ENCODE measurements at regions of chr7 and their contacts with region 1.

Region 1: DNA sequence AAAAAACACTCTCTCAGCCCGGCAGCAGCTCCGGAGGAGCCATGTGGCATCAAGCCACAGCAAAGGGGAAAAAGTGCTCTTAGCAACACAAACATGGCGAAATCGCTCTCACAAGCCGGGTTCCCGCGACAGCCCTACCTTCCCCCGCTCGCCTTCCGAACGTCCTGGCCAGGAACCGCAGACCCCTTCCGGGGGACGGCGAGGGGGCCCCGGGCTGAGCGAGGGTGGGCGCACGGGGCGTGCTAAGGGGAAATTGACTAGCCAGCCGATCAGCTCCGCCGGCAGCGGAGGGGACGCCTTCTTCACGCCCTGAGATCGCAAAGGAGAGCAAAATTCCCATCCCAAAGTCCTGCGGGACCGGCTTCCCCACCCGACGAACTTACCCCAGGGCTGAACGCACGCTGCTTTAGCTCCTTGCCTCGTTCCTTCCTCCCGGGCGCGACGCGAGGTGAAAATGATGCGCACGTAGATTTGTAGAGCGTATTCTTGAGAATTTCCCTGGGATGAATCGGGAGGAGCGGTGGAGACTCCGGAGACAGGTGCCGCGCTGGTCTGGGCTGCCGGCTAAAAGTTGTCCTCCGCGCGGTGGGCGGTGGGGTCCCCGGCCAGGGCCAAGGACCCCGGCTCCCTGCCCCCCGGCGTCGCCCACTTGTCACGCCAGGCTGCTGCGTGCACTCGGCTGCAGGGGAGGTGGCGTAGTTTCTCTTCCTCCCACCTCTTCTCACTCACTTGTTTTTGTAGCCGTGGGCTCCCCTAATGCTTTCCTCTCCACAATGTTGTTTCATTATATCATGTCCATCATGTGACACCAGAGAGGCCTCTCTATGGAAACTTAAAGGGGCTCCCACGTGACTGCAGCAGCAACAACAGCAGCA is 220.1 kb upstream of the MKLN1 start:
- DNase-seq: peak; percentile 94
- ATAC-seq: peak; percentile 44
- H3K4me3 ChIP-seq: peak overlapping the region; percentile 85 to 100 (median 98)
- H3K4me3 Mint-ChIP-seq: peak overlapping the region; percentile 85
- H3K27ac ChIP-seq: peak overlapping the region; percentile 95 to 98
- H3K27ac Mint-ChIP-seq: peak overlapping the region; percentile 91
- H3K4me1 ChIP-seq: peaks cover 71 to 75% of the 10 kb centered on the region in 2 donors
- H3K4me1 Mint-ChIP-seq: peaks cover 72% of the 10 kb centered on the region
- H3K27me3 ChIP-seq: no peaks in the 10 kb centered on the region
- H3K27me3 Mint-ChIP-seq: no peaks in the 10 kb centered on the region
- CTCF ChIP-seq: no peak

Region 2: GRCh38 chr7:130615583-130615982 is 492.0 kb before region 1 on chr7:
- CTCF ChIA-PET with region 1: no interaction called
- POLR2A ChIA-PET with region 1: no interaction called
- intact Hi-C with region 1: no loop called
- DNase-seq: no peak
- ATAC-seq: no peak
- H3K4me3 ChIP-seq: no peak overlapping the region
- H3K4me3 Mint-ChIP-seq: no peak overlapping the region
- H3K27ac ChIP-seq: no peak overlapping the region
- H3K27ac Mint-ChIP-seq: no peak overlapping the region
- H3K4me1 ChIP-seq: no peaks in the 10 kb centered on the region
- H3K4me1 Mint-ChIP-seq: no peaks in the 10 kb centered on the region
- H3K27me3 ChIP-seq: no peaks in the 10 kb centered on the region
- H3K27me3 Mint-ChIP-seq: no peaks in the 10 kb centered on the region
- CTCF ChIP-seq: no peak

Region 3: DNA sequence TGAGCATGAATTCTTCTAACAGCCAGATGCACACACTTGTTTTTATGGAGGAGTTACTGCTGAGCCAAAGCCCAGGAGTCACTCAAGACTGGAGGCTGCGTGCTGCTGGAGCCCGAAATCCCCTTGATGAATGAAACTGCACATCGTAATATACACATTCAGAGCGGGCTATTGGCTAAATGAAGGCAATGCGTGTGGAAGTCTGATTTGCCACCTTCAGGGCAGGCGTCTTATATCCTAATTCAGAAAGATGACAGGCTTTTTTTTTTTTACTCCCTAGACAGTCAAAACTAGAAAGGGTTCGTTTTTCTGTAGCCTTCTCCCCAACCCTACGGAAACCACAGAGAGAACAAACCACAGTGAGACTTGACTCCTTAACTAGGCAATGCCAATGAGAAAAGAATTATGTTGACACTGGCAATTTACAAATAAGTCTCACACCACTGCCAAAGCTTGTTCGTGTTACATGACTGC is 146.4 kb before region 1 on chr7:
- CTCF ChIA-PET with region 1: no interaction called
- POLR2A ChIA-PET with region 1: interaction called, 3 read pairs
- intact Hi-C with region 1: loop called (anchors 5 kb)
- DNase-seq: peak; percentile 78
- ATAC-seq: peak; percentile 34
- H3K4me3 ChIP-seq: peak overlapping the region in 4 of 5 experiments; percentile 24 to 61 (median 38)
- H3K4me3 Mint-ChIP-seq: peak overlapping the region; percentile 90
- H3K27ac ChIP-seq: peak overlapping the region; percentile 66 to 81
- H3K27ac Mint-ChIP-seq: peak overlapping the region; percentile 94
- H3K4me1 ChIP-seq: peaks cover 62% of the 10 kb centered on the region in 2 donors
- H3K4me1 Mint-ChIP-seq: peaks cover 68% of the 10 kb centered on the region
- H3K27me3 ChIP-seq: no peaks in the 10 kb centered on the region
- H3K27me3 Mint-ChIP-seq: no peaks in the 10 kb centered on the region
- CTCF ChIP-seq: no peak

Region 4: DNA sequence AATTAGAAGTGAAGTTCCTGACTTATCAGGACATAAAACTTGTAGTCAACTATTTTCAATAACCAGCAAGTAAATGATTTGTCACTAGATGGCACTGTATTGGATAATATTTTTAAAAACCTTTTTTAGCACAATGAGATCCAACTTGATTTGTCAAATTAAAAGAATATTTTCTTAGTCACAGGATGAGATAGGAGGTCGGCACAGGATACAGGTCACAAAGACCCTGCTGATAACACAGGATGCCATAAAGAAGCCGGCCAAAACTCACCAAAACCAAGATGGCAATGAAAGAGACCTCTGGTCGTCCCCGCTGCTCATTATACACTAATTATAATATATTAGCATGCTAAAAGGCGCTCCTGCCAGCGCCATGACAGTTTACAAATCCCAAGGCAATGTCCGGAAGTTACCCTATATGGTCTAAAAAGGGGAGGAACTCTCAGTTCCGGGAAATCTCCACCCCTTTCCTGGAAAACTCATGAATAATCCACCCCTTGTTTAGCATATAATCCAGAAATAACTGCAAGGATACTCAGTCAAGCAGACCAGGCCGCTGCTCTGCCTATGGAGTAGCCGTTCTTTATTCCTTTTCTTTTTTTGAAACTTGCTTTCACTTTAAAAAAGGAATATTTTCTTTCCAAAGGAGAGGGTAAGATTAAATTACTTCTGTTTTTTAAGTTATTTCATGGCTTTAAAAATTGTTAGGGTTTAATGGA is 35.6 kb before region 1 on chr7:
- CTCF ChIA-PET with region 1: interaction called, 3 read pairs
- POLR2A ChIA-PET with region 1: interaction called, 7 read pairs
- intact Hi-C with region 1: loop called (anchors 5 kb)
- DNase-seq: no peak
- ATAC-seq: no peak
- H3K4me3 ChIP-seq: no peak overlapping the region
- H3K4me3 Mint-ChIP-seq: no peak overlapping the region
- H3K27ac ChIP-seq: no peak overlapping the region
- H3K27ac Mint-ChIP-seq: no peak overlapping the region
- H3K4me1 ChIP-seq: peaks cover 38 to 48% of the 10 kb centered on the region in 2 donors
- H3K4me1 Mint-ChIP-seq: peaks cover 78% of the 10 kb centered on the region
- H3K27me3 ChIP-seq: no peaks in the 10 kb centered on the region
- H3K27me3 Mint-ChIP-seq: no peaks in the 10 kb centered on the region
- CTCF ChIP-seq: peak; percentile 65

Region 5: DNA sequence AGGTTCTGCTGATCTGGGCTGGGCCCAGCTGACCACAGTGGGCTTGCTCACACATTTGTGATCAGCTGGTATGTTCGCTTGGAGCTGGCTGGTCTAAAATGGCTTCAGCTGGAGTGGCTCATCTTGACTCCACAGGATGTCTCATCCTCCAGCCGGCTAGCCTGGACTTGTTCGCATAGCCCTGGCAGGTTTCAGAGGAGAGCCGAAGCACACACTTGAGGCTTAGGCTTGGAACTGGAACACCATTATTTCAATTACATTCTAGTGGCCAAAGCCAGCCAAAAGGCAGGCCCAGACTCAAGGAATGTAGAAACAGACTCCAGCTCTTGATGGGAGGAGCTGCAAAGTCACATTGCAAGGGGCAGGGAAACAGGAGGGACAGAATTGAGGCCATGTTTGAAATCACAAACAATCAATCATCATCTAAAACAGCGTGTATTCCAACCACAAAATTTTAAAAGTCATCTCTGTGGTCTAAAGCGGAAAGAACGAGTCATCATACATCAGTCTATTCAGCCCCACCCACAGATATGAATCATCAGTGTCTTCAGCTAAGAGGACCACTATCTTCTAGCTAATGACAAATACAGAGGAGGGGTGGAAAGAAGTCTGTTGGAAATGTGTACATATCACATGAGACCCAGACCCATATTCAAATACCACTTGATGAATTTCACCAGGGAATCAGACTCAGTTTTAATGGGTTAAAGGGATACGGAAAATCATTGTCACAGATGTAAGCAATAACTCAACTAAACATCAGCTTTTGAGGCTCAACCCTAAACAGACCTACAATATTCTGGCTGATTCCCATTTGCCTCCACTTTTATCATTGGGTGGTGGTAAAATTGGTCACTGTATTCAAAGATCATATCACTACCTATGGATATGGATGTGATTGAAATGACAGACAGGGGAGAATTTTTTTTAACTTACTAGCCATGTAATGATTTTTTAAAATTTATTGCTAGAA is 81.1 kb after region 1 on chr7:
- CTCF ChIA-PET with region 1: interaction called, 3 read pairs
- POLR2A ChIA-PET with region 1: interaction called, 4 read pairs
- intact Hi-C with region 1: loop called (anchors 1 kb)
- DNase-seq: peak; percentile 13
- ATAC-seq: peak; percentile 85
- H3K4me3 ChIP-seq: no peak overlapping the region
- H3K4me3 Mint-ChIP-seq: no peak overlapping the region
- H3K27ac ChIP-seq: no peak overlapping the region
- H3K27ac Mint-ChIP-seq: peak overlapping the region; percentile 39
- H3K4me1 ChIP-seq: peaks cover 0 to 3% of the 10 kb centered on the region in 2 donors
- H3K4me1 Mint-ChIP-seq: peaks cover 14% of the 10 kb centered on the region
- H3K27me3 ChIP-seq: peaks cover 0 to 5% (median 0%) of the 10 kb centered on the region in 4 experiments
- H3K27me3 Mint-ChIP-seq: no peaks in the 10 kb centered on the region
- CTCF ChIP-seq: no peak

Region 6: GRCh38 chr7:131302876-131303707 is 195.5 kb after region 1 on chr7:
- CTCF ChIA-PET with region 1: interaction called, 11 read pairs
- POLR2A ChIA-PET with region 1: interaction called, 4 read pairs
- intact Hi-C with region 1: no loop called
- DNase-seq: peak; percentile 42
- ATAC-seq: no peak
- H3K4me3 ChIP-seq: no peak overlapping the region
- H3K4me3 Mint-ChIP-seq: no peak overlapping the region
- H3K27ac ChIP-seq: no peak overlapping the region
- H3K27ac Mint-ChIP-seq: no peak overlapping the region
- H3K4me1 ChIP-seq: no peaks in the 10 kb centered on the region
- H3K4me1 Mint-ChIP-seq: peaks cover 2% of the 10 kb centered on the region
- H3K27me3 ChIP-seq: no peaks in the 10 kb centered on the region
- H3K27me3 Mint-ChIP-seq: no peaks in the 10 kb centered on the region
- CTCF ChIP-seq: peak; percentile 41

Region 7: DNA sequence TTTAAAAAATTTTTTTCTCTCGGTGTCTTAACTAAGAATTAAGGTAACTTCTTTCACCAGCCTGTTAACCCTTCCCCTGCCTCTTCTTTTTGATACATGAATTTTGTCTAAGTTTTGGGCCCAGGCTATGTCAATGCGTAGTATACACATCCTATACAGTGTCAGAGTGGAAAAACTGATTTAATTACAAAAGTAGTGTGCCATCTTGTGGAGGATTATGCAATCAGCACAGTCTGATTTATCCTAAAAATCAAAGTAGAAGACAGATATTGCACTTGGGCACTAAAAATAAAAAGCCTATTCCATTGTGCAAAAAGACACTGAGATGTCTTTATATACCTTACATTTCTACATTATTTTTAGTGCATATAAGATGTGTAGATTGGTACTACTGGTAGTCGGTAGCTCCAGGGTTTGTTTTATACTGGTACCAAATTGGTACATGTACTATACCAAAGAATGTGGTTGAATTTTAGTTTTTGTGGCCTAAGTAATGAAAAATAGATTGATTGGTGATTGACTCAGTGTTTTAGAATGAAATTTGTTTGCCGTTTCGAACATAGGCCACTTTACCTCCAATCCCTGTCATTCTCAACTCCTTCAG is 316.7 kb after region 1 on chr7:
- CTCF ChIA-PET with region 1: interaction called, 5 read pairs
- POLR2A ChIA-PET with region 1: no interaction called
- intact Hi-C with region 1: loop called (anchors 5 kb)
- DNase-seq: peak; percentile 56
- ATAC-seq: peak; percentile 69
- H3K4me3 ChIP-seq: no peak overlapping the region
- H3K4me3 Mint-ChIP-seq: no peak overlapping the region
- H3K27ac ChIP-seq: no peak overlapping the region
- H3K27ac Mint-ChIP-seq: no peak overlapping the region
- H3K4me1 ChIP-seq: no peaks in the 10 kb centered on the region
- H3K4me1 Mint-ChIP-seq: peaks cover 2% of the 10 kb centered on the region
- H3K27me3 ChIP-seq: no peaks in the 10 kb centered on the region
- H3K27me3 Mint-ChIP-seq: no peaks in the 10 kb centered on the region
- CTCF ChIP-seq: peak; percentile 80

Measured in B cell (primary cell).